Right ventricle myocardium superior (tissue), 1 donor: ENCODE measurements at regions of chr3 and their contacts with region 1.

Region 1: GRCh38 chr3:38651154-38651789 is 1.8 kb upstream of the SCN5A start:
- DNase-seq: peak; percentile 78
- ATAC-seq: peak; percentile 60

Region 2: GRCh38 chr3:38496131-38496910 is 155.0 kb before region 1 on chr3 and contains the start of gene EXOG:
- intact Hi-C with region 1: loop called (anchors 5 kb)
- DNase-seq: peak; percentile 94
- ATAC-seq: peak; percentile 93
- total RNA-seq, gene EXOG: 23.2 TPM

Region 3: DNA sequence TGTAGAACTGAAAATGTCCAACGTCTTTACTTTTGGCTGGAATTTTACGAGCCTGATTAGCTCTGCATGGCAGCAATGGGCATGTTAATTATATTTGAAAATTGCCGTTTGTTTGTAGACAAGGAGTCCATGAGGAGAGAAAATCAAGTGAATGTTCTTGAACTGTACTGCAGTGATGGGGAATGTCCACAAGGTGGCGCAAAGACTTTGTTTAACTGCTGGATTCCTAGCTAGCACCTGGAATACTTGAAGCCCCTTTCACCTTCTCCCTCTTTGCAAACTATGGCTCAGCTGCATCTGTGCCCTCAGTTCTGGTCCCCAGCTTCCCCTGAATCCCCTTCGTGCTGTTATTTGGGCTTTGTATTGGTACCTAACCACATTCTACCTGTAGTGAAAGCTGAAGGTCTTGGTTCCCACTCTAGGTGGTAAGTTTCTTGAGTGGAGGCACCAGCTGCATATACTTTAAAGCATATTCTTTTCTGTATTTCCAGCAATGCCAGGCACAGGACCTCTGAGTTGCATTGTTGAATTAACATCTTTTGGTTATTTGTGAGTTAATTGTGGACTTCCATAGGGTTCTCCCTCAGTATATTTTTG is 129.8 kb before region 1 on chr3:
- intact Hi-C with region 1: loop called (anchors 5 kb)
- DNase-seq: no peak
- ATAC-seq: peak; percentile 76